Breast epithelium (tissue), 4 donors: ENCODE measurements at regions of chr21 and their contacts with region 1.

Region 1: DNA sequence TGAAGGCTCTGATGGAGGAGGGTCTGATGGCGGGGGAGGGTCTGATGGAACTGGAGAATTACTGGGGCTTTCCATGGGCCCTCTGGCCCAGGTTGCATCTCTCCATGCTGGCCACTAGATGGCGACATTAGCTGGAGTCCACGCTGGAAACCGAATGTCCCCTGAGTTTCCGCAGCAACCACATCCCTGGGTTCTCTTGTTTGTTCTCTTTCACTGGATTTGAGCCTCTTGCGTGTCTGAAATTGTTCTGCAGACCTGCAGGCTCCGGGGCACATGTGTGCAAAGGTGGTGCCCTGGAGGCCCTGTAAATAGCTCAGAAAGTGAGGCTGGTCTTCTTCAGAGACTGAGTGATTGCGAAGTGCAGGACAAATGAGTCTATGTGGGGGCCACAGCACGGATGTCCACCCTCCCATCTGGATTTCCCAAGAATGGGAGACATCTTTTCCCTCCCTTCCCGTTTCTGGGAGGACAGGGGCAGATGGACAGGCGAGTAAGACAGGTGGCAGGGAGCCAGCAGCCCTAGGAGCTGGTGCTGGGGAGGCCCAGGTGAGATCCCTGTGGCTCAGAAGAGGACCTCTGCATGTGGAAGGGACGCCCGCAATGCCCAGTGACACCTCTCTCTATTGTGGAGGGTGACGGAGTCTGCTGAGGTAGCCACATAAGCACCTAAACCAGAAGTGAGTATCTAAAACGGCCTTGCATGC is 73.2 kb upstream of the ABCG1 start:
- DNase-seq: peak; percentile 37 to 57
- H3K4me3 ChIP-seq: no peak overlapping the region
- H3K27ac ChIP-seq: no peak overlapping the region
- H3K4me1 ChIP-seq: no peaks in the 10 kb centered on the region
- H3K27me3 ChIP-seq: no peaks in the 10 kb centered on the region
- CTCF ChIP-seq: peak; percentile 85 to 95 (median 85)
- POLR2A ChIP-seq: no peak

Region 2: GRCh38 chr21:41108668-41109563 is 1036.8 kb before region 1 on chr21:
- intact Hi-C with region 1: loop called (anchors 5 kb)
- DNase-seq: no peak
- H3K4me3 ChIP-seq: no peak overlapping the region
- H3K27ac ChIP-seq: peak overlapping the region in 1 of 2 donors; percentile 25
- H3K4me1 ChIP-seq: no peaks in the 10 kb centered on the region
- H3K27me3 ChIP-seq: peaks cover 0 to 7% of the 10 kb centered on the region in 2 donors
- CTCF ChIP-seq: no peak
- POLR2A ChIP-seq: no peak

Region 3: GRCh38 chr21:42299324-42300044 is 153.8 kb after region 1 on chr21:
- intact Hi-C with region 1: no loop called
- DNase-seq: peak in 1 of 2 donors; percentile 54
- H3K4me3 ChIP-seq: peak overlapping the region in 2 of 3 donors; percentile 3 to 39
- H3K27ac ChIP-seq: peak overlapping the region; percentile 84 to 90
- H3K4me1 ChIP-seq: peaks cover 0 to 4% of the 10 kb centered on the region in 2 donors
- H3K27me3 ChIP-seq: no peaks in the 10 kb centered on the region
- CTCF ChIP-seq: no peak
- POLR2A ChIP-seq: no peak

Region 4: DNA sequence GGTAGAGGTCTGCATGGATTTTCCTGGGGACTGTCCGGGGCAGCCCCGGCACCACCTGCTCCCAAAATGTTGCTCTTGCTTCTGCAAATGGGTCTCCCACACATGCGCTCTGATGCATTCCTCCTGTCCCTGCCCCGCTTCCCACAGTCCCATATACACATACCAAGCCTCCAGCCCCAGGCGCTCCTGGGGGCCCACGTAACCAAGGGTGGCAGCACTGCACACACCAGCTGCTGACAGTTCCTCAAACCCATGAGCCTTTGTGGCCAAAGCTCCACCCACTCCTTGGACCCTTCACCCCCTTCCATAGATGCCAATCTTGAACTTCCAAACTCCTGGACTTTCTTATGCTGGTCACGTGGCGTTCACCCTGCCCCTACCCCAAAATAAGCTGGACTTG is 300.1 kb after region 1 on chr21:
- intact Hi-C with region 1: loop called (anchors 2 kb)
- DNase-seq: no peak
- H3K4me3 ChIP-seq: no peak overlapping the region
- H3K27ac ChIP-seq: no peak overlapping the region
- H3K4me1 ChIP-seq: no peaks in the 10 kb centered on the region
- H3K27me3 ChIP-seq: no peaks in the 10 kb centered on the region
- CTCF ChIP-seq: no peak
- POLR2A ChIP-seq: no peak

Region 5: GRCh38 chr21:42561762-42562650 is 416.3 kb after region 1 on chr21:
- intact Hi-C with region 1: no loop called
- DNase-seq: peak in 1 of 2 donors; percentile 28
- H3K4me3 ChIP-seq: no peak overlapping the region
- H3K27ac ChIP-seq: no peak overlapping the region
- H3K4me1 ChIP-seq: no peaks in the 10 kb centered on the region
- H3K27me3 ChIP-seq: no peaks in the 10 kb centered on the region
- CTCF ChIP-seq: no peak
- POLR2A ChIP-seq: no peak